Mammary epithelial cell (primary cell): ENCODE measurements at regions of chr12 and their contacts with region 1.

Region 1: GRCh38 chr12:74111688-74112360 is 425.8 kb upstream of the ATXN7L3B start:
- DNase-seq: peak; percentile 65
- H3K4me3 ChIP-seq: no peak overlapping the region
- H3K27ac ChIP-seq: no peak overlapping the region
- H3K4me1 ChIP-seq: no peaks in the 10 kb centered on the region
- H3K27me3 ChIP-seq: no peaks in the 10 kb centered on the region
- CTCF ChIP-seq: peak; percentile 54 to 83

Region 2: DNA sequence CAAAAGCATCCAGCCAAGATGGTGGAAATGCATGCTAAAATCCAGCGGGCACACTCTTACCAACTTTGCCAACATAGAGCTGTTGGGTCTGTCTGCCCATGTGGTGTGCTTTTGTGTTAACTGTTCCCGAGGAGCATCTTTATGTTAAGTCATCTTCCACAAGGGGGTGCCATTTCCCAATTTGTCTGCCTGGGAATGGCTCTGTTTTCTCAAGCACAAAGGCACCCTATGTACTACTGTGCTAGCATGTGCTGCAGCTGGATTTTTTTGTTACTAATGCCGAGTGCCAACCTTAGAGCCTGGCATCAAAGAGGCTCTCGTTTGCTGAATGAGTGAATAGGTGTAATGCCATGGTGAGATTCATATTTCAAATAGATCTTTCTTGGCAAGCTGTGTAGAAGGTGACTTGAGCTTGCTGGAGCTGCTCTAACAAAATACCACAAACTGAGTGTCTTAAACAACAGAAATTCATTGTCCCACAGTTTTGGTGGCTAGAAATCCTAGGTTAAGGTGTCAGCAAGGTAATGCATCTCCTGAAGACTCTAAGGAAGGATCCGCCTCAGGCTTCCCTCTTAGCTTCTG is 1765.4 kb before region 1 on chr12:
- CTCF ChIA-PET with region 1: no interaction called
- dilution Hi-C with region 1: no loop called
- in situ Hi-C with region 1: no loop called
- intact Hi-C with region 1: loop called (anchors 10 kb)
- DNase-seq: peak; percentile 75
- H3K4me3 ChIP-seq: no peak overlapping the region
- H3K27ac ChIP-seq: no peak overlapping the region
- H3K4me1 ChIP-seq: no peaks in the 10 kb centered on the region
- H3K27me3 ChIP-seq: no peaks in the 10 kb centered on the region
- CTCF ChIP-seq: peak; percentile 50 to 71

Region 3: DNA sequence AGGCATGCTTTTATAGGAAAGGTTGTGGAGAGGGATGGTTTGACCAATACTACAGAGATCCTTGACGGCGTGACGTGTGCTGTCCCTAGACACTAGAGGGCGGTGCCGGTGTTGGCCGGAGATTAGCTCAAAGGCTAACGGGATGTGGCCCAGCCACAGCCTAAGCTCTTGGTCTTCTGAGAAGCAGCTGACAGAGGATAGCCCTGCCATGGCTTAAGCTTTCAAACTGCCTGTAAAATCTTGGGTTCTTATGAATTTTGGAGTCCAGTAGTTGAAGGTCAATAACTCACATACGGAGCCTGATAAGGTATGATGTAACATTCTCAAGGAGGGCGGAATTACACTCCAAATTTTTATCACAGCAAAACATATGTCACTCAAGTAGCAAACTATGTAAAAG is 89.9 kb before region 1 on chr12:
- CTCF ChIA-PET with region 1: interaction called, 3 read pairs
- dilution Hi-C with region 1: no loop called
- in situ Hi-C with region 1: no loop called
- intact Hi-C with region 1: loop called (anchors 5 kb)
- DNase-seq: peak; percentile 55
- H3K4me3 ChIP-seq: no peak overlapping the region
- H3K27ac ChIP-seq: no peak overlapping the region
- H3K4me1 ChIP-seq: no peaks in the 10 kb centered on the region
- H3K27me3 ChIP-seq: no peaks in the 10 kb centered on the region
- CTCF ChIP-seq: peak; percentile 67 to 89

Region 4: GRCh38 chr12:74365178-74365964 is 253.5 kb after region 1 on chr12:
- CTCF ChIA-PET with region 1: no interaction called
- dilution Hi-C with region 1: no loop called
- in situ Hi-C with region 1: no loop called
- intact Hi-C with region 1: loop called (anchors 1 kb)
- DNase-seq: peak; percentile 34
- H3K4me3 ChIP-seq: no peak overlapping the region
- H3K27ac ChIP-seq: no peak overlapping the region
- H3K4me1 ChIP-seq: no peaks in the 10 kb centered on the region
- H3K27me3 ChIP-seq: peaks cover 5% of the 10 kb centered on the region
- CTCF ChIP-seq: peak; percentile 74 to 80

Region 5: GRCh38 chr12:74415633-74416032 is 303.8 kb after region 1 on chr12:
- CTCF ChIA-PET with region 1: interaction called, 7 read pairs
- dilution Hi-C with region 1: no loop called
- in situ Hi-C with region 1: no loop called
- intact Hi-C with region 1: loop called (anchors 2 kb)
- DNase-seq: peak; percentile 15
- H3K4me3 ChIP-seq: no peak overlapping the region
- H3K27ac ChIP-seq: no peak overlapping the region
- H3K4me1 ChIP-seq: no peaks in the 10 kb centered on the region
- H3K27me3 ChIP-seq: no peaks in the 10 kb centered on the region
- CTCF ChIP-seq: peak; percentile 45 to 64

Region 6: DNA sequence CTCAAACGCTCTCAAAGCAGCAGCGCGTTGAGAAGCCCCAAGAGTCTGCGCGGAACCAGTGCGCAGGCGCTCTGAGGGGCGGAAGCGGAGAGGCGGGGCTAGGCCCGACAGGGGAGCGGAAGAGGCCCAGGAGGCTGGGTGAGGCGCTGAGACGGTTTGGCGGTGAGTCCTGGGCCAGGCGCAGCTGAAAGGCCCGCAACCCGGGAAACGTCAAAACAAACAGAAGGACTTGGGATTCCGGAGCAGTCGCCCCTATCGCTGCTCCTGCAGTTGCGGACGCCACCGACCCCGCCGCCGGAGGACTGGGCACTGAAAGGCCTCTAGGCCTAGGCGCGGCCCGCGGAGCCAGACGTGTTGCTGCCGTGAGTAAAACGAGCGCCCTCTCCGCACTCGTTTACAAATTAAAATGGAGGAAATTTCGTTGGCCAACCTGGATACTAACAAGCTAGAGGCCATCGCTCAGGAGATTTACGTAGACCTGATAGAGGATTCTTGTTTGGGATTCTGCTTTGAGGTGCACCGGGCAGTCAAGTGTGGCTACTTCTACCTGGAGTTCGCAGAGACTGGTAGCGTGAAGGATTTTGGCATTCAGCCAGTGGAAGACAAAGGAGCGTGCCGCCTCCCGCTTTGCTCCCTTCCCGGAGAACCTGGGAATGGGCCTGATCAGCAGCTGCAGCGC is 426.0 kb after region 1 on chr12 and contains the start of gene ATXN7L3B:
- CTCF ChIA-PET with region 1: no interaction called
- dilution Hi-C with region 1: no loop called
- in situ Hi-C with region 1: no loop called
- intact Hi-C with region 1: loop called (anchors 2 kb)
- DNase-seq: peak; percentile 94
- H3K4me3 ChIP-seq: peak within 1 kb of the TSS; percentile 67 to 78 (median 69)
- H3K27ac ChIP-seq: peak within 1 kb of the TSS; percentile 97
- H3K4me1 ChIP-seq: peaks cover 24% of the 10 kb centered on the region
- H3K27me3 ChIP-seq: no peaks in the 10 kb centered on the region
- CTCF ChIP-seq: peak in 1 of 2 donors; percentile 8
- total RNA-seq, gene ATXN7L3B: 22.0 to 22.2 TPM

Region 7: DNA sequence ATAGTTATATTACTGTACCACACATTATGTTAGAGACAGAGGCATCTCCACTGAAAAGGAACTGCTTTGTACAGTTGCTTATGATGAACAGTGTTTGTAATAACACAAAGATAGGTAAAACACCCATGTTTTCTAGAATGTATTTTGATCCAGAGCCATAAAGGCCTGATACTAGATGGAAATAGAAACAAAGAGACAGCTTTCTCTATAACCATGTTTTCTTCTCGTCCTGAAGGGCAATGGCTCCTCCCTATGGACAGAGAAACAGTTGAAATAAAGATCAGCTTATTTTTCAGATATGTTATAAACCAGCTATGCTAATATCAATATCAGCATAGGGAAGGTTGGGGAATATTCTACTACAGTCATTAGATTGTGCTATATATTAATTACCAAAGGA is 535.0 kb after region 1 on chr12:
- CTCF ChIA-PET with region 1: no interaction called
- dilution Hi-C with region 1: no loop called
- in situ Hi-C with region 1: no loop called
- intact Hi-C with region 1: loop called (anchors 5 kb)
- DNase-seq: peak; percentile 30
- H3K4me3 ChIP-seq: no peak overlapping the region
- H3K27ac ChIP-seq: no peak overlapping the region
- H3K4me1 ChIP-seq: no peaks in the 10 kb centered on the region
- H3K27me3 ChIP-seq: peaks cover 2% of the 10 kb centered on the region
- CTCF ChIP-seq: peak; percentile 34 to 62

Region 8: DNA sequence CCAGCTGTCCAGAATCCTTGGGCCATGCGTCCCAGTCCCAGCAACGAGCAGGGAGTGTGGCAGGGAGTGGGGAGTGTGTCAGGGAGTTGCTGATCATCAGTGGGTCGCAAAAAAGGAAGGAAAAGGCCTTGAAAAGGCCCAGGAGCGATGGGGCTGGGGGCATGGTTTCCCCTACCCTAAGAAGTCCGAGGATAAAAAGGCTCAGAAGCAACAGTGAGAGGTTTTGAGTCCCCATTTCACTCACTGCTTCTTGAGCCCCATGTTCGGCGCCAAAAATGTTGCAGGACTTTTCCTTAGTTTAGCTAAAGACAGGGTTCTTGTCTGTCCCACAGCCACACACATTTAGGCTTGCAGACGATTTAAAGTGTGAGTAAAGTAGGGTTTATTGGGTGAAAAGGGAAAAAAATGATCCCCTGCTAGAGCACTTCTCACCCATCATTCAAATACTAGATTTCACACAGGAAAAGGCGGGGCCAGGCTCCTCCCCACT is 908.3 kb after region 1 on chr12:
- CTCF ChIA-PET with region 1: no interaction called
- dilution Hi-C with region 1: no loop called
- in situ Hi-C with region 1: no loop called
- intact Hi-C with region 1: no loop called
- DNase-seq: peak; percentile 9
- H3K4me3 ChIP-seq: no peak overlapping the region
- H3K27ac ChIP-seq: no peak overlapping the region
- H3K4me1 ChIP-seq: no peaks in the 10 kb centered on the region
- H3K27me3 ChIP-seq: no peaks in the 10 kb centered on the region
- CTCF ChIP-seq: no peak